Esophagus squamous epithelium (tissue), 5 donors: ENCODE measurements at regions of chr2 and their contacts with region 1.

Region 1: DNA sequence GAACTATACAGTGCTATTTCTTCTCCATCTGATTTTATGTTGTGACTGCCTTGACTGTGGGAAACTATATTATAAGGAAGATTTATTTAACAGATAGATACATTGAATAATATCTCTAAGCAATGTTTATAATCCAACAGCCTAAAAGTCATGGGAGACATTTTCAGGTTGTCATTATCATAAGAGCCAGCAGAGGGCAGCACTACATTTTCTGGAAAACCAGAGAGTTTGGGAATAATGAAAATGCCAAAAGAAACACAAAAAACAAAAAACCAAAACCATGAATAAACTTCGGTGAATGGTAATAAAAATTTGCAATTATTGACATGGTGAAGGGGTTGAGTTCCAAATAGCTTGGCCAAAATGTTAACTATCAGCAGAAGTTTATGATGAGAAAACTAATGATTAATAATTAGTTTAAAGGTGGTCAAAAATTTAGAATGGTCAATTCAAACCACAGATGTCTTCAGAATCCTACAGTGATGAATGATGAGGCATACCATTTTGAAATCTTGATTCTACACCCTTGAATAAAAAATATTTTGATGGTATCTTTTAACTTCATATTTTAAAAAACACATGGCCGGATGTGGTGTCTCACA is 4.7 kb downstream of the EEF1B2 start:
- DNase-seq: no peak
- H3K4me3 ChIP-seq: no peak overlapping the region
- H3K27ac ChIP-seq: no peak overlapping the region
- H3K4me1 ChIP-seq: peaks cover 9 to 44% (median 18%) of the 10 kb centered on the region in 3 donors
- H3K27me3 ChIP-seq: no peaks in the 10 kb centered on the region
- CTCF ChIP-seq: peak; percentile 53 to 88 (median 74)
- POLR2A ChIP-seq: no peak

Region 2: DNA sequence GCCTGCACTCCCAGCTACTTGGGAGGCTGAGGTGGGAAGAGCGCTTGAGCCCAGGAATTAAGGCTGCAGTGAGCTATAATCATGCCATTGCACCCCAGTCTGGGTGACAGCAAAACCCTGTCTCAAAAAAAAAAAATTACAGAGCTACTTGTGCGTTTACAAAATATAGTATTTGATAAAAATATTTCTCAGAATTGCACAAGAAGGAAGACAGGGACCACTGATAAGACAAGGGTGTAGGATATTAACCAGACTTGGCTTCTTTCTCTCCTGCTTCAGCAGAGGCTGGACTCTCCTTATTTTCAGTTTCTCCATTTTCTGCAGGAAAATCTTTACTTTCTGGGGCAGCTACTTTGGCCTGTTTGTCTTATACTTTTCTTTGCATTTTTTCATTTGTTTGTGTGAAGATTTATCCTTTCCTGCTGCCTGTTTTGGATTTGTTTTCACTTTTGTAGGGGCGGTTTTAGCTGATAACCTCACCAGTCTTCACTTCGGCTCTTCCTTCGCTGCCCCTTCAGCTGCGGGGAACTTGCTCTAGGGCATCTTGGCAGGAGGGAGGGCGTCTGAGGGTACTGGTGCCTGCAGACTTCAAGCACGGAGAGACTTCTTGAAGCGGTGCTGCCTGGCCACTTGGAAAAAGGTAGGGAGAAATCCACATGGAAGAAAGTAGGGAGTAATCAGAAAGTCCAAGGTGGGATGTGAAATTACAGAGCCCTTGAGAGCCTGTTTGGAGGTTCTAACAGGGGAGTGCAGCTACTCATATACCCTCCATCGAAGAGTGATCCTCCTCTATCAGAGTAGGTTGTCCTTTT is 95.2 kb after region 1 on chr2:
- intact Hi-C with region 1: loop called (anchors 5 kb)
- DNase-seq: no peak
- H3K4me3 ChIP-seq: no peak overlapping the region
- H3K27ac ChIP-seq: no peak overlapping the region
- H3K4me1 ChIP-seq: peaks cover 0 to 26% (median 0%) of the 10 kb centered on the region in 3 donors
- H3K27me3 ChIP-seq: peaks cover 0 to 100% (median 28%) of the 10 kb centered on the region in 4 donors
- CTCF ChIP-seq: no peak
- POLR2A ChIP-seq: no peak

Region 3: GRCh38 chr2:206477296-206477695 is 312.9 kb after region 1 on chr2:
- intact Hi-C with region 1: no loop called
- DNase-seq: no peak
- H3K4me3 ChIP-seq: no peak overlapping the region
- H3K27ac ChIP-seq: peak overlapping the region in 1 of 4 donors; percentile 33
- H3K4me1 ChIP-seq: peaks cover 0 to 9% (median 2%) of the 10 kb centered on the region in 3 donors
- H3K27me3 ChIP-seq: no peaks in the 10 kb centered on the region
- CTCF ChIP-seq: no peak
- POLR2A ChIP-seq: no peak